ENCODE measurements at regions of chr14 and their contacts with region 1.

Region 1: DNA sequence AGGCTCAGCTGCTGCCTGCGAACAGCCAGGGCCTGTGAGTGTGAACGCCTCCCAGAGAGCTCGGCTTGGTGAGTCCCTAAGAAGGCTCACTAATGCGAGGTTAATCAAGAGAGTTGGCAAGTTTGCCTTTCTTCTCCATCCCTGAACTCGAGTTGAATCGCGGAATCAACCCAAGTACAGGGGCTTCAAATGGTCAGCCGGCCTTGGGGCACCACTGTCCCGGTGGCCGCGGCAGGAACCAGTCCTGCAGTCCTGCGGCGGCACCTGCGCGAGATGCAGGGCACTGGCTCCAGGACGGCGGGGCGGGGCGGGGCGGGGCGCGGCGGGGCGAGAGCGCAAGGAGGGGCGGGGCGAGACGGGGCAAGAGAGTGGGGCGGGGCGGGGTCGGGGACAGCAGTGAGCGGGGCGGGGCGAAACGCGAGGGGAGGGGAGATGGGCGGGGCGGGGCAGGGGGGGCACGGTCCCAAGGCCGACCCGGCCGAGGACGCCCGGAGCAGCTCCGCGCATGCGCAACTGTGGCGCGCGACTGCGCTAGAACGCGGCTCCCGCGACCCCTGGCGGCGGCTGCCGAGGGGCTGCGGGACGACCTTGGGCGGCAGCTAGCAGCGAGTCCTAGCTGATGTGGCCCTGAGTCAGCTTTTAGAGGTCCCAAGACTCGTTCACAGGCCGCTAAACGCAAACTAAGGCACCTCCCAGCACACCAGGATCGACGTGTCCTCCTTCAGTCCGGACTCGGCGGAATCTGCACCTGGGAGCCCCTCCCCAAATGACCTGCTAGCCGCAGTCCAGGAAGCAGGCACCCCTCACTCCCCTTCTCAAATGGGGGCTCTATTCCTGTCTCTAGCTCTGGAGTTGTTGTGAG is 58.0 kb downstream of the TTC7B start:
- DNase-seq: peak; percentile 91 to 93
- ATAC-seq: peak; percentile 90 to 97
- H3K4me3 ChIP-seq: peak overlapping the region; percentile 51
- H3K27ac ChIP-seq: peak overlapping the region; percentile 90 to 92
- H3K4me1 ChIP-seq: peaks cover 10% of the 10 kb centered on the region; the same call in 2 of the 3 replicates
- CTCF ChIP-seq: peak; percentile 76
- EP300 ChIP-seq: no peak
- POLR2A ChIP-seq: peak; percentile 55
- RAD21 ChIP-seq: peak; percentile 54 to 85

Region 2: GRCh38 chr14:90288651-90289355 is 469.5 kb before region 1 on chr14:
- CTCF ChIA-PET with region 1: interaction called, 11 read pairs
- POLR2A ChIA-PET with region 1: no interaction called
- DNase-seq: no peak
- ATAC-seq: no peak
- H3K4me3 ChIP-seq: no peak overlapping the region
- H3K27ac ChIP-seq: no peak overlapping the region
- H3K4me1 ChIP-seq: no peaks in the 10 kb centered on the region
- CTCF ChIP-seq: no peak
- EP300 ChIP-seq: no peak
- POLR2A ChIP-seq: no peak
- RAD21 ChIP-seq: no peak

Region 3: DNA sequence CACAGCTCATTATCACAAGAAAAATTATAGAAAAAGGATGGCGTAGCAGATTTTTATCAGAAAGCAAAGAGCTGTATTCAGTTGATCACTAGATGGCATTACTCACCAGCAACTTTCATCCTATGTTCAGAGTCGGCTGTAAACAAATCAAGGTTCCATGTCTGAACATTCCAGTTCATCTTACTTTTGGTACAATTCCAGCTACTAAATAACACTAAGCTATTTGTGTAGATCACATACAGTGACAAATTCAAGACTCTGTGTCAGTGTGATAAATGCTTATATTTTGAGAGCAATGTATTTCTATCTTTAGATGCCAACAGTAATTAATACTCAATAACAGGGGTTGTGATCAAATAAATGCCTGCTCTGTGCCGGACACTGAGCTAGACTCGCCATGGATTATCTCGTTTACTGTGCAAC is 456.6 kb before region 1 on chr14:
- CTCF ChIA-PET with region 1: interaction called, 33 read pairs
- POLR2A ChIA-PET with region 1: no interaction called
- DNase-seq: peak; percentile 38 to 62
- ATAC-seq: peak; percentile 72 to 84; a peak in 4 of 6 replicates
- H3K4me3 ChIP-seq: no peak overlapping the region
- H3K27ac ChIP-seq: no peak overlapping the region
- H3K4me1 ChIP-seq: no peaks in the 10 kb centered on the region
- CTCF ChIP-seq: peak; percentile 66
- EP300 ChIP-seq: no peak
- POLR2A ChIP-seq: no peak
- RAD21 ChIP-seq: peak; percentile 71 to 79

Region 4: DNA sequence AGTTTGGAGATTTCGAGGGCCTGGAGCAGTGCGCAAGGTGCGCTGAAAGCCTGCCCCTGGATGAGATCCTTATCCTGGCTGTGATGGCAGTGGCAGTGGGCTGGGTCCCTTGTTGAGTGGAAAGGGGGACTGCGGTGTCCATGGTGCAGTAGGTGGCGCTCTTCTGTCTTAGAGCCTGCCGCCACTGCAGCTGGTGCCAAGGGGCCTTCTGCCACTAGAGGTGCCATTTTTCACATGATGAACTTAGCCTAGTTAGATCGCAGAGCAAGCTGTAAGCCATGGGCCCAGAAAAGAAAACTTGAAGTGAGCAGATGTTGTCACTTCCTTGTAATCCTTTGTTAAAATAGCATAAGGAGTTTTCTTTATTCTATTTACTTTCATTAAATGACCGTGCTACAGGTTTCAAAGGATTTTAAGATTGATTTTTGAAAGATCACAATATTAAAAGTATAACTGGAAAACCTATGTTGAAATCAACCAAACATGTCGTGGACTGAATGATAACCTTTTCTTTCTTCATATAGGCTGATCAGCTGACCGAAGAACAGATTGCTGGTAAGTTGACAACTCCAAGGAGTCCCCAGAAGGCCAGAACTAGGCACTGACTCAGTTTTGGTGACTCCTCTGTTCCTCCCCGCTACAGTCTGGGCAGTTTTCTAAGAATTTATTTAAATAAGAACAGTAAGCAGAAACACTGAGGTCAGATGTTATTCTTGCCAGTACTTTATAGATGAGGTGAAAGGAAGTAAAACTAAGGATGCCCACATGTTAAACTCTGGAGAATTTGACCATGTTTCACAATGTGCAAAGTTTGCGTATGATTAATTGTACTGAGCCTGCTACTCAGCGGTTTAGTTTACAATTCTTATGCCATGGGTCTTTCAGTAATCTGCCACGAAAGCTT is 358.5 kb before region 1 on chr14:
- CTCF ChIA-PET with region 1: interaction called, 4 read pairs
- POLR2A ChIA-PET with region 1: interaction called, 12 read pairs
- DNase-seq: peak; percentile 93 to 98
- ATAC-seq: peak; percentile 73 to 79
- H3K4me3 ChIP-seq: peak overlapping the region; percentile 88; the same call in 1 of the 3 replicates
- H3K27ac ChIP-seq: peak overlapping the region in 1 of 2 experiments; percentile 18; a peak in 1 of 6 replicates
- H3K4me1 ChIP-seq: peaks cover 31% of the 10 kb centered on the region
- CTCF ChIP-seq: peak; percentile 99
- EP300 ChIP-seq: no peak
- POLR2A ChIP-seq: no peak
- RAD21 ChIP-seq: peak; percentile 88 to 89

Region 5: GRCh38 chr14:90597981-90598380 is 160.3 kb before region 1 on chr14:
- CTCF ChIA-PET with region 1: no interaction called
- POLR2A ChIA-PET with region 1: no interaction called
- DNase-seq: no peak
- ATAC-seq: no peak
- H3K4me3 ChIP-seq: no peak overlapping the region
- H3K27ac ChIP-seq: no peak overlapping the region
- H3K4me1 ChIP-seq: peaks cover 11% of the 10 kb centered on the region
- CTCF ChIP-seq: no peak
- EP300 ChIP-seq: no peak
- POLR2A ChIP-seq: no peak
- RAD21 ChIP-seq: no peak

Region 6: GRCh38 chr14:90743425-90743824 is 14.8 kb before region 1 on chr14:
- CTCF ChIA-PET with region 1: interaction called, 10 read pairs
- POLR2A ChIA-PET with region 1: interaction called, 3 read pairs
- DNase-seq: no peak
- ATAC-seq: no peak
- H3K4me3 ChIP-seq: no peak overlapping the region
- H3K27ac ChIP-seq: no peak overlapping the region
- H3K4me1 ChIP-seq: no peaks in the 10 kb centered on the region
- CTCF ChIP-seq: no peak
- EP300 ChIP-seq: no peak
- POLR2A ChIP-seq: no peak
- RAD21 ChIP-seq: no peak

Region 7: DNA sequence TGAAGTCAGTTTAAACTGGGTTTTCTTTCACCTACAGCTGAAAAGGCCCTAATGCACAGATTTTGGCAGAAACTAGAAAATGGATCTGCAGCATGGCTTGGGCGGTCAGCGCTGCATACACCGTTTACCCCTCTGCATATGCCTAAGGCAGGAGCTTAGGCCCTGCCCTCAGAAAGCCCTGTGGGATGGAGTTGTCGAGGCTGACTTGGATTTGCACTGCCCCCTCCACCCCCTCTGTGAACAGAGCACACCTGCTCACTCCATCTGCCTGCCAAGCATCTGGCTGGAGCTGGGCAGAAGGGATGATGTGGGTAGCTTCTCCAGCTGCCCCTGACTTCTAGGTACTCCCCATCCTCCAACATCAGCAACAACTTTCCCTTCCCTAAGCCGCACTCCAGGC is 16.1 kb after region 1 on chr14:
- CTCF ChIA-PET with region 1: interaction called, 49 read pairs
- POLR2A ChIA-PET with region 1: no interaction called
- DNase-seq: no peak
- ATAC-seq: no peak
- H3K4me3 ChIP-seq: no peak overlapping the region
- H3K27ac ChIP-seq: no peak overlapping the region
- H3K4me1 ChIP-seq: no peaks in the 10 kb centered on the region
- CTCF ChIP-seq: no peak
- EP300 ChIP-seq: no peak
- POLR2A ChIP-seq: no peak
- RAD21 ChIP-seq: no peak

Region 8: DNA sequence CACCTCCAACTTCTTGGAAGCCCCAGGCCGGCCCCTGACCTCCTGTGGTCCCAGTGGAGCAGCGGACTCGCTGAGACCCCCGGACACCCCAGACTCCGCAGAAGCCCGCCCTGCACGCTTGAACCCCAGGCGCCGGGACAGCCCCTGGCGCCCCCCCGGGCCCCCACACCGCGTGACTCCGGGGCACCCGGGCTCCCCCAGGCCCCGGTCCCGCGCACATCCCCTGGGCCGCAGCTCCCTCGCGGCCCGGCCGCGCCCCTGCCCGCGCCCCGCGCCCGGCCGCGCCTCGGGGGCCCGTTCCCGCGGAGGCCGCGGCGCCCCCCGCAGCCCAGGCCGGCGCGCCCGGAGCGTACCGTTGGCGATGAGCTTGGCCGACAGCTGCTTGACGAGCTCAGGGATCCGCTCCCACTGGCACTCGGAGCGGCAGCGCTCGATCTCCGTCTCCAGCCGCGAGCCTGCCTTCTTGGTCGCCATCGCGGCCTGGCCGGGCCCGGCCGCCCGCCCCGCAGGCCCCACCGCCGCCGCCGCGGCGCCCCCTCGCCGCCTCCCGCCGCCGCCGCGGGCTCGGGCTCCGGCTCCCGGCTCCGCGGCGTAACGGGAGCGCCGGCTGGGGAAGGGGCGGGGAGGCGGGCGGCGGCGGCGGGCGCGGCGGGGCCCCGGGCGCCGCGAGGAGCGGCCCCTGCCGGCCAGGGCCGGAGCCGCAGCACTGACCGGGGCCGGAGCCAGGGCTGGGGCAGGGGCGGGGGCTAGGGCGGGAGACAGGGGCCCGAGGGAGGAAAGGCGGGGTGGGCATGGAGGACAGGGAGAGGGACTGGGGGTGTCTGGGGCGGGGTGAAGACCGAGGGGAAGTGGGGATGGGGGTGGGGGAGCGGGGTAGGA is 57.8 kb after region 1 on chr14 and contains the start of gene TTC7B:
- CTCF ChIA-PET with region 1: interaction called, 12 read pairs
- POLR2A ChIA-PET with region 1: no interaction called
- DNase-seq: peak in 1 of 2 experiments; percentile 83
- ATAC-seq: peak; percentile 88 to 89
- H3K4me3 ChIP-seq: peak within 1 kb of the TSS; percentile 90
- H3K27ac ChIP-seq: peak within 1 kb of the TSS; percentile 87 to 94
- H3K4me1 ChIP-seq: 0 out of 3 replicates have a peak, but pooled peaks cover 3% of the 10 kb centered on the region
- CTCF ChIP-seq: peak; percentile 49
- EP300 ChIP-seq: no peak
- POLR2A ChIP-seq: 0 out of 2 replicates have a peak, but pooled peaks have one; percentile 20
- RAD21 ChIP-seq: no peak
- polyA plus RNA-seq, gene TTC7B: 25.7 and 28.0 TPM in 2 replicates